Gastrocnemius medialis (tissue), 4 donors: ENCODE measurements at regions of chr12 and their contacts with region 1.

Region 1: DNA sequence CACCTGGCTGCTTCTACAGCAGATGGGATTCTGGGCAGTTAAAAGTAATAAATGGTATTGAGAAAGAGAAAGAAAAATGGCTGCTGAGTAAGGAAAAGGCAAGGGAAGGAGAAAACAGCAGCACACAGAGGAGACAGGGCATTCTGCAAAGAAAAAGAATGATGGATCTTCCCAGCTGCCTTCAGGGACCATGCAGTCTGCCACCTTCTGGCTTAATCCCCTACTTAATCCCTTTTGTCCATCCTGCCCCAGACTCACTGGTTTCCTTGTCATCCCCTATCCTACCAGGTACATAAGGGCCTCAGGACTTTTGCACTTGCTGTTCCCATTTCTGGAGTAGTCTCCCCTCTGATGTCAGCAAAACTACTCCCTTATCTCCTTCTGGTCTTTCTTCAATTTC is 107.6 kb downstream of the GAS2L3 start:
- DNase-seq: no peak
- ATAC-seq: no peak
- H3K4me3 ChIP-seq: no peak overlapping the region
- H3K27ac ChIP-seq: no peak overlapping the region
- H3K4me1 ChIP-seq: no peaks in the 10 kb centered on the region
- H3K27me3 ChIP-seq: no peaks in the 10 kb centered on the region
- CTCF ChIP-seq: no peak
- POLR2A ChIP-seq: no peak

Region 2: DNA sequence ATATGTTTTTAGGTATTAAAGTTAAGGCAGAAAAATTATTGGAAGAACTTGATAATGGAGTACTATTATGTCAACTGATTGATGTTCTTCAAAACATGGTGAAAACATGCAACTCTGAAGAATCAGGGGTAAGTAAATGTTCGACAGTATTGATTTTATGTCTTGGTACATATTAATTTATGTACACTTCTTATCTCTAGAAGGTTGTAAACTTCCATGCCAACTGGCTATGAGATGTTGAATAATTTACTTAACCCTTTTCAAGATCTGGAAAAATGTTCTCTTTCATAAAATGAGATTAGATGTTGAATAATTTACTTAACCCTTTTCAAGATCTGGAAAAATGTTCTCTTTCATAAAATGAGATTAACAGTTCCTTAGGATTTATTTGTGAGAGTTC is 79.4 kb before region 1 on chr12:
- in situ Hi-C with region 1: no loop called
- intact Hi-C with region 1: no loop called
- DNase-seq: no peak
- ATAC-seq: no peak
- H3K4me3 ChIP-seq: no peak overlapping the region
- H3K27ac ChIP-seq: no peak overlapping the region
- H3K4me1 ChIP-seq: no peaks in the 10 kb centered on the region
- H3K27me3 ChIP-seq: no peaks in the 10 kb centered on the region
- CTCF ChIP-seq: no peak
- POLR2A ChIP-seq: no peak

Region 3: DNA sequence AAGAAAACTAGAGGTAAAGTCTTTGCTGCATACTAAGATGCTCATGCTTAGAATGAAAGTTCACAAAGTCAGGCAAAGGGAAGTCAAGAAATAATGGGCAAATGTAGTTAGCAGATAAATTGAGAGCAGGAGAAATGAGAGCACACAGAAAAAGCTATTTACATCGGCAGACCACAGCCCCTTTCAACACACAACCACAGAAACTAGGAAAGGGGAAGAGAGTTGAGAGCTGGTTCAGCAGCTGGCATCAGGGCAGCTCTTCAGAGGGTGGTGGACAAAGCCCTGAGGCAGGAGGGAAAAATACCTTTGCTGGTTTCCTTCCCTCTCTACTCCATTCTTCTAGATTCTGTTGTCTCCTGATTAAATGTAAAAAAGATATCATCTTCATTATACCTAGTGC is 18.1 kb after region 1 on chr12:
- in situ Hi-C with region 1: no loop called
- intact Hi-C with region 1: loop called (anchors 1 kb)
- DNase-seq: no peak
- ATAC-seq: no peak
- H3K4me3 ChIP-seq: no peak overlapping the region
- H3K27ac ChIP-seq: no peak overlapping the region
- H3K4me1 ChIP-seq: no peaks in the 10 kb centered on the region
- H3K27me3 ChIP-seq: no peaks in the 10 kb centered on the region
- CTCF ChIP-seq: no peak
- POLR2A ChIP-seq: no peak